Panc1 (cell line): ENCODE measurements at regions of chr3 and their contacts with region 1.

Region 1: DNA sequence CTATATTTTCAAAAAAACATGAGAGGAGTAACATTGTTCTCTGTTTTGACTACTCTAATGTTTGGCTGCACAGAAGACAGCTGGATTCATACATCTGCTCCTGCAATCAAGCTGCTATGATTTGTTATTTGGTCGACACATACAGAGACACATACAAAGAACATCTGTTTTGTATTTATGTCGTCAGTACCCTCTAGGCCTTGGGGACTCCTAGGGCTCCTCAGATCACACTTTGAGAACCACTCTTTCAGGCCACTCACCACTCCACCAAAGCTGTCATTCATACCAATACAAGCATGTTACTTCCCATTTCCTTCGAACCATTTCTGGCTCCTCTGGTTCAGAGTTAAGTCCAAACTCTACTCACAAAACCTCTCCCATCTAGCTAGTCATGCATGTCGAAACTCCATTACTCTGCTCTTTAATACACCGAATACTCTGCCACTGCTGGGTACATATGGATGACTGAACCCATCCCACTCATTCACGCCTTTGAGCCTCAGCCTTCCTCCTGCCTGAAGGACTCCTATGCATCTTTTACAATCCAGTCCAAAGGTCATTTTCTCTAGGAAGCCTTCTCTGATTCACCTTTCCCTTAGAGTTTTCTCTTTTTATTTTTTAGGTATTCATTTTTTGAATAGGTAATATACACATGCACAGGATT is 102.9 kb upstream of the ARHGEF3 start:
- DNase-seq: no peak
- ATAC-seq: no peak
- H3K4me3 ChIP-seq: no peak overlapping the region
- H3K27ac ChIP-seq: no peak overlapping the region
- H3K4me1 ChIP-seq: no peaks in the 10 kb centered on the region
- H3K27me3 ChIP-seq: no peaks in the 10 kb centered on the region
- CTCF ChIP-seq: no peak

Region 2: DNA sequence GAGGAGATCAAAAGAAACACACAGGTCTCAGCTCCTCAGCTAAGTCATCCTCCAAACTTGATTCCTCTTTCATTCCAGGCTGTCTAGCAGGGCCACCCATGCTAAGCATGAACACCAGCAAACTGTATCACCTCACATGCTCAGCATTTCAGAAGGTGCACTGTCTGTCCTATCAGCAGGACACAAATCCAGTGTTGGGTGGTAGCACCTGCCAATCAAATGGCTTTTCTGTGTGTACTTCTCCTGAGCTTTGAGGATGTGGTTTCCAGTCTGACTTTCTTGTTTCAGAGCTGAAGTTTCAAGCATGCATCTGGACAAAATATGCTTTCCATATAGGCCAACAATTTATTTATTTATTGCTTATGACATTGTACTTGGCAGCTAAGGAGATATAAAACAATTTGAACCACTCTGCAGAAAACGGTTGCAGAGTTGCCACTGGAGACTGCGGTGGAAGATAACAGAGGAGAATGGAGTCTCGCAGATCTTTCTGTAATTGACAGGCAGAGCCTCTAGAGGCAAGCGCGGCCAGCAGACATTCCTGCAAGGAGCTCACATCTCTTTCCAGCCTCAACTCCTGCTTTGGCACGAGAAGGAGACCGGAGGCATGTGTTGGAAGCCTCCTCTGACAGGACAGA is 1250.4 kb before region 1 on chr3:
- CTCF ChIA-PET with region 1: no interaction called
- POLR2A ChIA-PET with region 1: no interaction called
- in situ Hi-C with region 1: no loop called
- intact Hi-C with region 1: no loop called
- DNase-seq: no peak
- ATAC-seq: no peak
- H3K4me3 ChIP-seq: no peak overlapping the region
- H3K27ac ChIP-seq: no peak overlapping the region
- H3K4me1 ChIP-seq: no peaks in the 10 kb centered on the region
- H3K27me3 ChIP-seq: no peaks in the 10 kb centered on the region; the same call in 1 of the 2 replicates
- CTCF ChIP-seq: no peak

Region 3: DNA sequence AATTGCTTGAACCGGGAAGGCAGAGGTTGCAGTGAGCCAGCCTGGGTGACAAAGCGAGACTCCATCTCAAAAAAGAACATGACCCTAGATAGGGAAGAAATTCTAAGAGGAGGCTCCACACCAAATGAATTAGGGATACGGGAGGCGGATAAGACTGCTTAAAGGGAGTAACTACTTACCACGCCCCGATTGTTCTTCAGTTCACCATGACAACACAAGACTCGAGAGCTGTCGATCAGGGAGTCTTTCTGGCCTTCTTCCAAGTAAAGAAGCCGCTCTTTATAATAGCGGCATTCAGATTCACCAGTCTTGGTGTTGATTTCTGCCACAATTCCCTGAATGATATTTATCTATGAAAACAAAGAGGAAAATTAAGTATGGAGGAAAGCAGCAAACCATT is 167.7 kb before region 1 on chr3:
- CTCF ChIA-PET with region 1: no interaction called
- POLR2A ChIA-PET with region 1: interaction called, 11 read pairs
- in situ Hi-C with region 1: no loop called
- intact Hi-C with region 1: no loop called
- DNase-seq: no peak
- ATAC-seq: no peak
- H3K4me3 ChIP-seq: no peak overlapping the region
- H3K27ac ChIP-seq: no peak overlapping the region
- H3K4me1 ChIP-seq: no peaks in the 10 kb centered on the region
- H3K27me3 ChIP-seq: no peaks in the 10 kb centered on the region
- CTCF ChIP-seq: no peak

Region 4: DNA sequence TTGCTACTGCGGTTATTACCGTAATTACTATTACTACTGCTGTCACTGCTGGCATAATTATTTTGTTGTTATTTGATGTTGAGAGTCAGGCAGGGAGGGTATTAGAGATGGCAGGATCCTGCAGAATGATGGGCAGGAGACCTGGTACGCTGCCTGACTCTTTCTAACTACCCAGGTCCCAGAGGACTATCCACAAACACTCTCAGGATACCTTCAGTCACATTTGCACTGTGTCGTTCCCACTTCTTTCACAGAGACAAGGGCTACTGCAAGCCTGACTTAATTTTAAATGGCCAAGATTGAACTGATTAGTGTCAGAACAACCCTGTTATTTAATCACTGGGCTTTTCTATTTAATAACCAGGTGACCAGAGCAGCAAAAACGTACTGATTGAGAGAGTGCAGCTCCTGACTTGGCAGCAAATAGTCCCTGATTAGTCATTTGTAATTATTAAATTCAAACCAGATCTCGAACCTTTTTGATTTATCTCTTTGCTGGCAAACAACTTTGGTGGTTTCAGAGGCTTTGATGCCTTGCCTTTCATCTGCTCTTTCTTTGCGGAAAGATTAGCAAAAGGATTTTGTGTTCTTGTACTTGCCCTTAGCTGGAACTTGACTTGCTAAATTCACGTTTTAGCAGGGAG is 14.1 kb before region 1 on chr3:
- CTCF ChIA-PET with region 1: no interaction called
- POLR2A ChIA-PET with region 1: no interaction called
- in situ Hi-C with region 1: no loop called
- intact Hi-C with region 1: no loop called
- DNase-seq: no peak
- ATAC-seq: no peak
- H3K4me3 ChIP-seq: no peak overlapping the region
- H3K27ac ChIP-seq: no peak overlapping the region
- H3K4me1 ChIP-seq: no peaks in the 10 kb centered on the region
- H3K27me3 ChIP-seq: no peaks in the 10 kb centered on the region
- CTCF ChIP-seq: no peak

Region 5: GRCh38 chr3:56928379-56929068 is 23.8 kb after region 1 on chr3:
- CTCF ChIA-PET with region 1: no interaction called
- POLR2A ChIA-PET with region 1: no interaction called
- in situ Hi-C with region 1: no loop called
- intact Hi-C with region 1: no loop called
- DNase-seq: no peak
- ATAC-seq: no peak
- H3K4me3 ChIP-seq: no peak overlapping the region
- H3K27ac ChIP-seq: no peak overlapping the region
- H3K4me1 ChIP-seq: peaks cover 12% of the 10 kb centered on the region
- H3K27me3 ChIP-seq: no peaks in the 10 kb centered on the region
- CTCF ChIP-seq: no peak